ENCODE measurements at regions of chr1 and their contacts with region 1.

Region 1: GRCh38 chr1:235866913-235867845 is 473 bp upstream of the LYST start:
- DNase-seq: peak; percentile 98
- ATAC-seq: peak; percentile 99

Region 2: DNA sequence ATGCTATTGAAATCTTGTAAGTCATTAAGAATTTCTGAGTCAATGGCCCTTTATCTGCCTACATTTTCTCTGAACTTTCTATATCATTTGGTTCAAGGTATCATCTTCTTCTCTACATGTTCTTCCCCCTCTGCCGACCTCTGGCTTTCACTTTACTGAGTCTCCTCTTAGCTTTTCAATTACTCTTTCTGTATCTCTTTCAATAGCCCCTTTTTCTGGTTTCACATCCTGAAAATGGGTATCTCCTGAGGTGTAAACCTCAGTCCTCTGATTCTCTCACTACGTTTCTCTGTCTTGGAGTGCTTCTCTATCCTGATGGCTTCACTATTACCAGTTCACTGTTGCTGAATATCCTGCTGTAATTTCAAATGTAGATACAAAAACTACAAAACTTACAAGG is 99.4 kb before region 1 on chr1:
- intact Hi-C with region 1: no loop called
- DNase-seq: no peak
- ATAC-seq: no peak

Region 3: GRCh38 chr1:235971571-235972310 is 104.6 kb after region 1 on chr1:
- intact Hi-C with region 1: loop called (anchors 1 kb)
- DNase-seq: peak; percentile 94
- ATAC-seq: peak; percentile 93

Region 4: DNA sequence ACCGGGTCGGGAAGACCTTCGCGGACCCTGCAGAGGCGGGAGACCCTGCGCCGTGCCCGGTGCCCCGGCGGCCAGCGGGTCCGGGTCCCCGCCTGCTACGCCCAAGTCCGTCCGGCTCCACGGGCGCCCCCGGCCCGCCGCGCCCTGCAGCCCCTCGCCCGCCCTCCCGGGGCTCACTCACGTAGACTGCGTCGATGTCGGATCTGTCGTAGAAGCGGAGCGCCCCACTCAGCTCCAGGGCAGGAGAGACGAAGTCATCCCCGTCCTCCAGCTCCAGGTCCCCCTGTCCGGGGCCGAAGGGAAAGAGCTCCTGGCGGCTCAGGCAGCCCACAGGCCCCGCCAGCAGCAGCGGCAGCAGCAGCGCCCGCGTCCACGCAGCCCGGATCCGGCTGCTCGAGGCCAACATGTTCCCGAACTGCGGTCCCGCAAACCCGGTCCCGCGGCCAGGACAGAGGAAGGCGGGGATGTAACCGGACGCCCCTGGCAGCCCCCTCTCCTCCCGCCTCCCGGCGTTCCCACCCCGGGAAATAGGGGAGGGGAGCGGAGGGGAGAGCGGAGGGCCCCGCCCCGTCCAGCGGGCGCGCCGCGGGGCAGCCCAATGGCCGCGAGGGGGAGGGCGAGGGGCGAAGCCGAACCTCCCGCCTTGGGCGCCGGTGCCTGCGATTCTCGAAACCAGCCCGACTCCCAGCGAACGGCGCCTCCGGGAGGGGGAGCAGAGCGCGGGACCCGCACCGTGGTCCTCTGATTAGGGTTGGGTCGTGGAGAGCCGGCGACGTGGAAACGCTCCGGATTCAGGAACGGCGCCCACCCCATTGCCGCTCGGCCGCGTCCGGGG is 197.7 kb after region 1 on chr1 and contains the start of gene NID1:
- intact Hi-C with region 1: loop called (anchors 10 kb)
- DNase-seq: peak; percentile 94
- ATAC-seq: peak; percentile 86
- total RNA-seq, gene NID1: 65.8 TPM